ENCODE measurements at regions of chr3 and their contacts with region 1.

Region 1: GRCh38 chr3:14178247-14179113 is at the starts of genes LSM3 and XPC:
- DNase-seq: peak; percentile 92 to 98
- H3K4me3 ChIP-seq: peak within 1 kb of the TSS; percentile 69 to 71
- H3K27ac ChIP-seq: peak within 1 kb of the TSS; percentile 91 to 99
- H3K4me1 ChIP-seq: peaks cover 0 to 31% of the 10 kb centered on the region in 2 donors
- H3K27me3 ChIP-seq: no peaks in the 10 kb centered on the region
- CTCF ChIP-seq: peak in 1 of 3 experiments; percentile 8
- total RNA-seq, gene LSM3: 3.9 TPM
- total RNA-seq, gene XPC: 48.9 TPM

Region 2: GRCh38 chr3:14124615-14125190 is 53.8 kb before region 1 on chr3 and contains the starts of genes CHCHD4 and TMEM43:
- intact Hi-C with region 1: loop called (anchors 1 kb)
- DNase-seq: peak; percentile 98 to 100
- H3K4me3 ChIP-seq: peak within 1 kb of the TSS; percentile 84 to 100
- H3K27ac ChIP-seq: peak within 1 kb of the TSS; percentile 96 to 98
- H3K4me1 ChIP-seq: peaks cover 19 to 26% of the 10 kb centered on the region in 2 donors
- H3K27me3 ChIP-seq: no peaks in the 10 kb centered on the region
- CTCF ChIP-seq: peak in 1 of 3 experiments; percentile 2
- total RNA-seq, gene CHCHD4: 1.9 TPM
- total RNA-seq, gene TMEM43: 166 TPM

Region 3: DNA sequence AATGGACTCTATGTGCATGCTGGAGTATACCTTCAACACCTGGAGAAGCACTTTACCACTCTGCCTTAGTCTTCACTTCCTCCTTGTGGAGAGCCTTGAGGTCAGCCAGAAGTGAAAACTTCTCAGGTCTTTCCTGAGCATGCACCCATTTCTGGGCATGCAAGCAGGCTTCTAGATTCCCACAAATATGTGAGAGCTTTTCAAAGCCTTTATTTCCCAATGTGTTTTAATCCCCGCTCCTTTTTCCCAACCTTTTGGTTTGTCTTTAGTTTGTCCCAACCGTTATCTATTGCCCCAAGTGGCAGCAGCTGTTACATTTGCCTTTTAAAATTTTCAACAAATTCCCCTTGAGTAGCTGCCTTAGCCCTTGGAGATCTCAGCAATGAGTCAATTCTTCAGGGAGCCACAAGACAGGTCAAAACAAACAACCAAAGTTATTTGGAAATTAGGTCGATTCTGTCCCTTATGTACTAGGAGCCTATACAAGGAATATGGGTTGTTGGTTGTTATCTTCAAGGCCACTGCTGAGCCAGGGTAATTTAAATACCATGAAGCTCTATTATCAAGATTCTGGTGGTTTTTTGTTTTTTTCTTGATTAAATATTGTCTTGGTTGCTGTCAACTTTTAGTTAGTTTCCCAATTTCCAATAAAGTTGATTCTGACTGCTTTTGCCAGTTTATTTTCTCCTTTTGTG is 44.6 kb after region 1 on chr3:
- intact Hi-C with region 1: no loop called
- DNase-seq: no peak
- H3K4me3 ChIP-seq: no peak overlapping the region
- H3K27ac ChIP-seq: no peak overlapping the region
- H3K4me1 ChIP-seq: no peaks in the 10 kb centered on the region
- H3K27me3 ChIP-seq: no peaks in the 10 kb centered on the region
- CTCF ChIP-seq: no peak